Sciatic nerve (tissue), 2 donors: ENCODE measurements at regions of chr3 and their contacts with region 1.

Region 1: GRCh38 chr3:109918740-109919139 is 581.4 kb upstream of the DPPA4 start:
- DNase-seq: no peak
- ATAC-seq: no peak

Region 2: DNA sequence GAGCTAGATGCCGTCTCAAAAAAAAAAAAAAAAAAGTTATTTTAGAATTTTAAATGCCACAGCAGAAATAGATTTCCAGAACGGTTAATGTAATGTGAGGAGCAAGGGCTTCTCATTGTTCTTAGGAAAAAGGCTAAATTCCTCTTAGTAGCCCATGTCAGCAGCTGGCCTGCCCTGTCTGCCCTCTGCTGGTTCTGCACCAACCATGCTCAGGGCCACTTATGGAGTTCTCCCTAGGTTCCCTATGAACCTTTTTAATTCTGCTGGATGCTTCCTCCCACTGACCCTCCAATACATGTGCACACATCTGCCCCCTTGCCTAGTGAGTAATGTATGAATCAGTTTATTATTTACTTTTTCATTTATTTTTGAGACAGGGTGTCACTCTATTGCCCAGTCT is 549.2 kb before region 1 on chr3:
- intact Hi-C with region 1: loop called (anchors 5 kb)
- DNase-seq: no peak
- ATAC-seq: no peak

Region 3: DNA sequence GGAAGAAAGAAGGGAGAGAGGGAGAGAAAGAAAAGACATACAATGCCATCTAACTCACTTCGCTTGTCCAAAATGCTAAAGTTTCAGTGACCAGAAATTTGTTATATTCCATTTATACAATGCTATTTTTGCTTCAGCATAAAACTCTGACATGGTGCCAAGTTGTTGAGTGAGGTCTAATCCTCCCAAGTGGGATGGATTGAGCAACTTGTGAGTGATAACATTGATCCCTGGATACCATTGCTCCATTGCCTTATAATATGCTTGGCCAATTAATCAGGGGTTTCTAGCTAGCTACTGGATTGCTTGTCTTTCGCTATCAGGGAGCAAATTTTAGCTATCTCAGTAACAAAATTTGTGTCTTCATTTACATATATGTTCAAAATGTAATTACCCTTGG is 34.2 kb after region 1 on chr3:
- intact Hi-C with region 1: no loop called
- DNase-seq: no peak
- ATAC-seq: no peak